ENCODE measurements at regions of chr12 and their contacts with region 1.

Region 1: GRCh38 chr12:113912760-113913329 is 53.3 kb downstream of the RBM19 start:
- DNase-seq: no peak

Region 2: DNA sequence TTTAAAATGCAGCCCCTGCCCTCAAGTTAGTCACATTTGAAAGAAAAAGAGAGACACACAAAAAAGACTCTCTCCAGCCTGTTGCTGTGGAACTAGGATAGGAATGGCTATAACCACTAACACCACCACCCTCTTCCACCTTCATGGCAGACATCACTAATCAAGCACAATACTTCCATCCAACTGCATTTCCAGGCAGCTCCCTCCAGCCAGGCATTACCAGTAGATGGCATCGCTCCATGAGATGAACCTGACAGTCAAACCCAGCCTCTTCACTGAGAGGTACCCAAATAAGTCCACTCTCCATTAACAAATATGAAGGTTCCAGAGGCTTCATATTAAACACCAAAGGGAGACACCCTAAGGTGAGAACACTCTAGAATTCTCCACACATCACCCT is 602.4 kb before region 1 on chr12:
- intact Hi-C with region 1: loop called (anchors 10 kb)
- DNase-seq: no peak

Region 3: DNA sequence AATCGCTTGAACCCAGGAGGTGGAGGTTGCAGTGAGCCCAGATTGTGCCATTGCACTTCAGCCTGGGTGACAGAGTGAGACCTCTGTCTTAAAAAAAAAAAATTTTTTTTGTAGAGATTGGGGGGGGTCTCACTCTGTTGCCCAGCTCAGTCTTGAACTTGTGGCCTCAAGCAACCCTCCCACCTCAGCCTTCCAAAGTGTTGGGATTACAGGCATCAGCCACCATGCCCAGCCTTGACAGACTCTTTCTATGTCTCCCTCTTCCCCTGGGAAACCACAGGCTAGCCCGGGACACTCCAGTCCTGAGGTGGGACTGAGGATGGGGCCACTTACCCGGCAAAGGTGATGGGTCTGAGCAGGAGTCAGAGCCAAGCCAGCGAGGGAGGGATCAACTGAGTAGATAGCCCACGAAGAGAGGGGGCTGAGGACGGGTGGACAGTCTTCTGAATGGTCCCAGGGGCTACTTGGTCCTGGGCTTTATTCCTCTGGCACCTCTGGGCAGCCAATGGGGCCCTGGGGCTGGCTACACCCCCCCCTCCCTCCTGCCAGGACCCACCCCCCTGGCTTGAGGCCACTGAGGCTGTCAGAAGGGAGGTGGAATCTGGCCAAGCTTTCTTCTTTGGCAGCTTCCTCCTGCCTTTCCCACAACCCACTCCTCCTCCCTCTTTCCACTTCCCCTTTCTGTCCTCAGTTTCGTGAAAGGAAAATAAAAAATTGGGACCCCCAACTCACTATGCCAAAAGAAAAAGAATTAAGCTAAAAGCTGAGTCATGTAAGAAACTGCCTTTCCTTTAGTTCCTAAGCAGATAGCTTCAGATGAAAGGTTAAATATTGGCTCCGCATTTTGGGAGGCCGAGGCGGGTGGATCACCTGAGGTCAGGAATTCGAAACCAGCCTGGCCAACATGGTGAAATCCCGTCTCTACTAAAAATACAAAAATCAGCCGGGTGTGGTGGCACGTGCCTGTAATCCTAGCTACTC is 509.1 kb before region 1 on chr12 and contains the start of gene SDS:
- intact Hi-C with region 1: no loop called
- DNase-seq: no peak
- total RNA-seq, gene SDS: 0.81 TPM

Region 4: DNA sequence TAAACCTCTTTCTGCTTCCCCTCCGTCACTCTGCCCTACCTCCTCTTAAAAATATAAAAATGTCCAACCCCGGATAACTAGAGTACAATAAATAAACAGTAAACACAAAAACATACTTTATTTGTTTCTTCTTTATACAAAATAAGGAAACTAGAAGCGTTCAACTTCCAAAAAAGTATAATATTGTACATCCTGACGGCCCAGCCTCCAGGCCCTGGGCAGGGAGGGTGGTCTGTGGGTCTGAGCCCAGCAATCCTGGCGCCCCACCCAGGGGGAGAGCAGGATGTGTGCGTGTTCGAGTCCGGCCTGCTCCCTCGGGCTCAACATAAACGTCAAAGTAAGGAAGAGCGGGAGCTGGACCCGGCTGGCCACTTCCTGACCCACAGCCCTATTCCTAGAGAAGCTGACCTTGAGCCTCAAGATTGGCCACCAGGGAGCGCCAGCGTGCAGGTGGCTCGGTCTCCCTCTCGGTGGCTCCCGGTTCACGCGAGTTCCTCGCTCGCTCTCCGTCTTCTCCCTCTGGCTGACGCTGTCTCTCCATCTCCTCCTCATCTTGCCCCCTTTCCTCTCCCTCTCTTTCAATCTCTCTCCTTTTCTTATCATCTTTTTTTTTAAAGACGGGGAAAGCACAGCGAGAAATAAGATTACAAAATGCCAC is 450.6 kb before region 1 on chr12:
- intact Hi-C with region 1: loop called (anchors 2 kb)
- DNase-seq: peak; percentile 88

Region 5: DNA sequence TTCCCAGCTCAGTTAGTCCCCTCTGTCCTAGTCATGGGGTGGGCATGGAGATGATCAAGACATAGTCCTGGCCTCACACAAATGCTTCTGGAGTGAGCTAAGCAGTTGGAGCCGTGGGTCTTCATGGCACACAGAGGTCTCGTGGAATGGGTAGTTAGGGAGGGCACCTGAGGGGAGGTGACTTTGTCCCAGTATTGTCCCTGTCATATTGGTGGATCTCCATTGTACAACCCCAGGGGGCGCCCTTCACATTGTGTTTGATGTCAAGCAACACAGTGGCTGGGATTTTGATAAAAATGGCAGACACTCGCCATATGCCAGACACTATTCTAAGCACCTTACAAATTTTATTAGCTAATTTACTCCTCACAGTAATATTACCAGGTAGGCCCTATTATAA is 265.8 kb before region 1 on chr12:
- intact Hi-C with region 1: no loop called
- DNase-seq: no peak

Region 6: GRCh38 chr12:113874999-113875561 is 37.8 kb before region 1 on chr12:
- intact Hi-C with region 1: no loop called
- DNase-seq: no peak